PC-9 (cell line): ENCODE measurements at regions of chr4 and their contacts with region 1.

Region 1: GRCh38 chr4:183722731-183723560 is 63.9 kb downstream of the TRAPPC11 start:
- DNase-seq: peak; percentile 58 to 72
- H3K4me3 ChIP-seq: peak overlapping the region; percentile 54; the same call in 1 of the 2 replicates
- H3K27ac ChIP-seq: no peak overlapping the region
- H3K4me1 ChIP-seq: peaks cover 7% of the 10 kb centered on the region; the same call in 1 of the 2 replicates
- H3K27me3 ChIP-seq: no peaks in the 10 kb centered on the region
- CTCF ChIP-seq: no peak

Region 2: DNA sequence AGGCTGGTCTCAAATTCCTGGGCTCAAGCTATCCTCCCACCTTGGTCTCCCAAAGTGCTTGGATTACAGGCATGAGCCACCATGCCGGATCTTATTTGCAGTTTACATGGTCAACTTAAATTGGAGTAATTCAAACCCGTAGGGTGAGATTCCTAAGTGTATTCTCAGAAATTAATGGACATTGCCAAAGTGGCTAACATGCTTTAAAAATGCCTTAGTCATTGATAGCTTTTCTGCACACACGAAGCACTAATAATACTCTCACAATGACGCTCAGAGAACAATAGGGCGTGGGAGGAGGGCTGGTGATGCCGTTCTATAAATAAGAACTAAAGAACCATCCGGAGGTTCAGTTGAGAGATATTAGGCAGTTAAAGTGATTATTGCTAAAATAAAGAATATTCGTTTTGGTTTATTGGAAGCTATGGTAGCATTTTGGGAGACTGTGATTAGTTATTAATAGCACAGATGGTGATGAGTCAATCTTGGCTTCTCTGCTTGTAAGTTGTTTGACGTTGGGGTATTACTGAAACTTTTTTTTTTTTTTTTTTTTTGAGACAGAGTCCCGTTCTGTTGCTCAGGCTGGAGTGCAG is 15.2 kb after region 1 on chr4:
- CTCF ChIA-PET with region 1: no interaction called
- POLR2A ChIA-PET with region 1: no interaction called
- intact Hi-C with region 1: no loop called
- DNase-seq: peak; percentile 51 to 94
- H3K4me3 ChIP-seq: no peak overlapping the region
- H3K27ac ChIP-seq: peak overlapping the region; percentile 37
- H3K4me1 ChIP-seq: peaks cover 12% of the 10 kb centered on the region
- H3K27me3 ChIP-seq: no peaks in the 10 kb centered on the region
- CTCF ChIP-seq: no peak

Region 3: GRCh38 chr4:183797445-183798300 is 74.7 kb after region 1 on chr4:
- CTCF ChIA-PET with region 1: no interaction called
- POLR2A ChIA-PET with region 1: no interaction called
- intact Hi-C with region 1: loop called (anchors 2 kb)
- DNase-seq: peak in 1 of 2 experiments; percentile 62
- H3K4me3 ChIP-seq: peak overlapping the region; percentile 73
- H3K27ac ChIP-seq: no peak overlapping the region
- H3K4me1 ChIP-seq: peaks cover 5% of the 10 kb centered on the region; the same call in 1 of the 2 replicates
- H3K27me3 ChIP-seq: no peaks in the 10 kb centered on the region
- CTCF ChIP-seq: no peak

Region 4: DNA sequence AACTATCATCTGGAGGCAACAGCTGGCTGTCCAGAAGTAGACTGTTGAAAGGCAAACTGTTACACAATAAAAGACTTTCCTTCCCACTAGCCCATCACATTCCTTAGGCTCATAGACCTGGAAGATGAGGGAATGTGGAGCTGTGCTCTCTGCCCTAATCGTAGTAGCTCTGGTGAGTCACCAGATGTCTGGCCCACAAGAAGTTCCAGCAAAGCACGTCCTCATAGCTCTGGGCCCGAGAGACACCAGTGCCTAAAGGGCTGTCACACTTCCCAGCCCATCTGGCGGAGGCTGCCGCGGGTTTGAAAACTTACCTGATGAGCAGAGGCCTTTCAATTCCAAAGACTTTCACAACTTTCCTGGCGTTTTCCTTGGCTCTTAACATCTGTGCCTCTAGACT is 100.5 kb after region 1 on chr4:
- CTCF ChIA-PET with region 1: no interaction called
- POLR2A ChIA-PET with region 1: interaction called, 10 read pairs
- intact Hi-C with region 1: loop called (anchors 10 kb)
- DNase-seq: peak; percentile 58 to 86
- H3K4me3 ChIP-seq: no peak overlapping the region
- H3K27ac ChIP-seq: peak overlapping the region; percentile 39; the same call in 1 of the 2 replicates
- H3K4me1 ChIP-seq: peaks cover 13% of the 10 kb centered on the region
- H3K27me3 ChIP-seq: no peaks in the 10 kb centered on the region
- CTCF ChIP-seq: no peak